Right ventricle myocardium superior (tissue), 1 donor: ENCODE measurements at regions of chr2 and their contacts with region 1.

Region 1: DNA sequence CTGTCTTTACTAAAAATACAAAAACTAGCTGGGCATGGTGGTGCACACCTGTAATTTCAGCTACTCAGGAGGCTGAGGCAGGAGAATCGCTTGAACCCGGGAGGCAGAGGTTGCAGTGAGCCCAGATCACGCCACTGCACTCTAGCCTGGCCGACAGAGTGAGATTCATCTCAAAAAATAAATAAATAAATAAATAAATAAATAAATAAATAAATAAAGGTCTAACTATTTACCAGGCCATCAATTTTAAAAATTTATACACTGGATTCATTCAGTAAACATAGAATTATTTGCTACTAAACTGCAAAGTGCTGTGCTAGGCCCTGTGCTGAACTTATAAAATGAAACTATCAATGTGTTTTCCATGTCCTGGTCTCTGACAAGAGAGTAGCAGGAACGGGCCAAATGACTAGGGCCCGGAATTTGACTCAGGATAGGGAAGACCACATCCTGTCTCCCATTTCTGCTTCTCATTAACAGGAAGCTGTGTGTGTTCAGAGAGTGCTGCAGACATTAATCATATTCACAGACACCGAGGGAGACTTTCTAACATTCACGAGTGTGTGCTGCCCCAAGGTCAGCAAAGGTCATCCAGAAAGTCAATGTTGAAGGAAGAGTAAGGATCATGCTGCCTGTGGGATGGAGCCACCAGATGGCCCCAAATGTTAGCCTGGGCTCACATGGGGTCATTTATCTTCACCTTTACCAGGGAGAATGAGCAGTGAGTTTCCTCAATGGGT is 95.8 kb downstream of the SPP2 start:
- DNase-seq: no peak
- ATAC-seq: no peak

Region 2: DNA sequence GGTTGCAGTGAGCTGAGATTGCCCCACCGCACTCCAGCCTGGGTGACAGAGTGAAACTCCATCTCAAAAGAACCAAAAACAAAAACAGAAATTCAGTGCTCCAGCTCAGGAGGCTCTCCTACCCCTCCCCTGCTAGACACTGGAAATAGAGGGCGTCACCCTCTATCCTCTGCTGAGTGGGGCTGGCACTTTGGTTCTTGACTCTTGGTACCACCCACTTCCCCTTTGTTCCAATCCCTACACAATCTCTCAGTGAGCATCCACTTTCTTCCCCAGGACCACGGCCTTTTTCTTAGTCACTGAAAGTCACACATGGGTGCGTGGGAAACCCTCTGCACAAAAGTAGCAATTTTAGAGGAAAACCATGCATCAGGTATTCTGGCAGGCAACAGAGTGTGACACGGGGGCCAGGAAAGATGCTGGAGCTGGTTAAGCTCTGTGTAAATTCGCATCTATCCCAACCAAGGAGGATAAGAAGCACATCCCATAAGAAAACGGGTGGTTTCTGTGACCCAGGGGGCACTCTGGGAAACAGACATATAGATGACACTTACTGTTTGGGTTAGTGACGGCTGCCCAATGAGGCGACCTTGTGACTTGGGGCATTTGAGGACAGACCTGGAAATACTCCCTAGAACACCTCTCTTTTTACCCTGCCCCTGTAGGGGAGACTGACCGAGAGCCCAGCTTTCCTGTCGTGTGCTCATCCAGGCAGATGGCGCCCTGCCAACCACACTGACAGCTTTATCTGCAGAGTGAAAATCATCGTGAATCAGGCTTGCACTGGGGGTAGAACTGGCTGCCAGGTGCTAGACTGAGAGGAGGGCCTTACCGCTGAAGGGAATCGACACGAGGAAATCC is 299.6 kb before region 1 on chr2:
- intact Hi-C with region 1: no loop called
- DNase-seq: no peak
- ATAC-seq: no peak

Region 3: DNA sequence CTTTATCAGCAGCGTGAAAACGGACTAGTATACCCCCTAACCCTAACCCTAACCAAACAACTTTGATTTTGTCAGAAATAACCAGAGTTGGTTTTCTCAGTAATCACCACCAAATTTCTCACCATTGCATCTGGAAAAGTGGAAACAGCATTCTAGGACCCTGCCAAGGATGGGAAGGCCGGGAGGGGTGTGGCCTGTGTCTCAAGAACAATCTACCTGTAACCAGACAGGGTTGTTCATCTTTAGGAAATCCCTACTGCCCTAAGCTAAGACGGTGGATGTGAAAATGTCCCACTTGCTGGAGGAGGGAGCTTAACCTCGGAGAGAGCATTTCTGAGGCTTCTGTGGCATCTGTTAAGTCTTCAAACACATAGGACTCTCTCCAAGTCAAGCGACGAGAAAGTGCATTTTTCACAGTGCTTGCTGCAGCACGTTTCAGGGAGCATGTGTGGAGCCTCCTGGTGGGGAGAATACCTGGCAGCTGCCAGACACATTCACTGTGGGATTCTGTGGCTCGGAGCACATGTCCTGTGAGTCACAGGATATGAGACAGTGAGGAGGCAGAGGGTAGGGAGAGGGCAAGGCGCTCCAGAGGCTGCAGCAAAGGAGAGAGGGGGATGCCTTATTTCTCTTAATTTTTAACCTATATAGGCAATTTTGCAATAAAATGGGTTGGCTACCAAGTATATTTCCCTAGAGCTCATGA is 111.8 kb after region 1 on chr2:
- intact Hi-C with region 1: loop called (anchors 10 kb)
- DNase-seq: no peak
- ATAC-seq: peak; percentile 66

Region 4: DNA sequence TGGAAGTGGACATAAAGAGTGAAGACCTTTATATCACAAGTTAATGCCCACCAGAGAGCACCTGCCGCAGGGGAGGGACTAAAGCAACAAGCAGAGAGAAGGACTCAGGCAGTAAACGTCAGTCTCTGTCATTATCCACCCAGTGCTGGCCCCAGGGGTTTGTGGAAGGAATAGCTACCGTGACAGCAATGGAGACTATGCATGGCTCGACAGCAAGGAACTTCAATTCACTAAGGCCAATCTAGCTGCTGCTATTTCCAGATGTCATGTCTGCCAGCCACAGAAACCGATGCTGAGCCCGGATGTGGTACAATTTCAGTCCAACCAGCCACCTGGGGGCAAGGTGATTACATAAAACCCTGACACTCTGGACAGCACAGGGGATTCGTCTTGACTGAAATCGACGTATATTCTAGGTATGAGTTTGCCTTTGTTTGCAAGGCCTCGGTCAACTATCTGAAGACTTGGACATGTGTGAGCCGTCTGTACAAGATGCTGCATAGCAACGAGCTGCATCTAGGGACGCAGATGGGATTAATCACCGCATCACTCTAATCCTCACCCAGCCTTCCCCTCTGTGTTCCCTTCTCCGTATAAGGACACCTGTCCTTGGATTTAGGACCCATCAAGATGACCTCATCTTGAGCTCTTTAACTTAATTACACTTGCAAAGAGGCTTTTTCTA is 651.5 kb after region 1 on chr2:
- intact Hi-C with region 1: no loop called
- DNase-seq: no peak
- ATAC-seq: no peak